CD14-positive monocyte (primary cell): ENCODE measurements at regions of chr7 and their contacts with region 1.

Region 1: DNA sequence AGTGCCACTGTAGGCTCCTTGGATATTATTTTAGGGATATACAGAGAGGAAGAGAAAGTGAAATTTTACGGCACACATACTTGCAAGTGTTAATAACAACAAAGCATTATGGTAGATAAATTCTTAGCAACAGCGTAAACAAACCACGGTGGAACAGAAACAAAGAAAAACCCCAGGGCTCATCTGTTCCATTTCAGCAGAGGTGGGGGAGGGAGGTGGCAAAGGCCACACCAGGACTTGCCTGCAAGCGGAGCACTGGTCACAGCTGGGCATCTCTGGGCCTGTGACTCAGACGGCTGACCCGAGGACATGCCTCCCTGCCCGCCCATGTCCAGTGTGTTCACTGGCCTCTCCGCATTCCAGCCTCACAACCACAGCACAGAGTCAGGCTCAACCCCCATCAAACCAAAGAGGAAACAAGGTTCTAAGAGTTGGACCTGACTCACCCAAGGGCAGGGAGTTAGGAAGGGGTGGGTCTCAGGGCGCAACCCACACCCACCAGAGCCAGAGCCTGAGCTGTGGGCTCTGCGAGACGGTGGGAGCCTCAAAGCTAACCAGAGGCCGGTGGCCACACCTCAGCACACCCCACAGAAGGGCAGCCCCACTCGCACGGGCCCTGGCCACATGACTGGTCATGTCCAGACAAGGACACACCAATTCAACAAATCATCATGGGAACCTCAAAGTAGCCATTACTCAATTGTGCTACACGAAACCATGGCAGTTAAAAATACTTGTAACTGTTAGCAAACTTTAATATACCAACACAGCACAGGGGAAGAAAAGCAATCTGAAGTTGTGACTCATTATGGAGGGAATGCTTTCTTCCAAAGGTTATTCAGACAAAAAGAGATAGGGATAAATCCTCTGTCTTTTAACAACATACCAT is 10.7 kb downstream of the ESYT2 start:
- DNase-seq: peak; percentile 97 to 99 (median 99)
- H3K4me3 ChIP-seq: peak overlapping the region; percentile 14 to 59 (median 37)
- H3K4me3 Mint-ChIP-seq: peak overlapping the region; percentile 61 to 87
- H3K27ac ChIP-seq: peak overlapping the region; percentile 97 to 100
- H3K27ac Mint-ChIP-seq: peak overlapping the region; percentile 98 to 99 (median 98)
- H3K4me1 ChIP-seq: peaks cover 62 to 68% of the 10 kb centered on the region in 2 donors
- H3K4me1 Mint-ChIP-seq: peaks cover 73% of the 10 kb centered on the region
- H3K27me3 ChIP-seq: no peaks in the 10 kb centered on the region
- H3K27me3 Mint-ChIP-seq: peaks cover 0 to 2% (median 0%) of the 10 kb centered on the region in 3 donors
- CTCF ChIP-seq: no peak

Region 2: GRCh38 chr7:158704704-158705468 is 113.7 kb before region 1 on chr7 and contains the start of gene NCAPG2:
- intact Hi-C with region 1: loop called (anchors 5 to 10 kb)
- DNase-seq: peak; percentile 99 to 100 (median 99)
- H3K4me3 ChIP-seq: peak within 1 kb of the TSS; percentile 87 to 96 (median 95)
- H3K4me3 Mint-ChIP-seq: peak within 1 kb of the TSS; percentile 74 to 84
- H3K27ac ChIP-seq: peak within 1 kb of the TSS; percentile 88 to 95
- H3K27ac Mint-ChIP-seq: peak within 1 kb of the TSS; percentile 74 to 92 (median 90)
- H3K4me1 ChIP-seq: peaks cover 35 to 50% of the 10 kb centered on the region in 2 donors
- H3K4me1 Mint-ChIP-seq: peaks cover 35% of the 10 kb centered on the region
- H3K27me3 ChIP-seq: no peaks in the 10 kb centered on the region
- H3K27me3 Mint-ChIP-seq: no peaks in the 10 kb centered on the region
- CTCF ChIP-seq: peak; percentile 23
- polyA plus RNA-seq, gene NCAPG2: 1.1 to 3.1 (median 1.7) TPM

Region 3: DNA sequence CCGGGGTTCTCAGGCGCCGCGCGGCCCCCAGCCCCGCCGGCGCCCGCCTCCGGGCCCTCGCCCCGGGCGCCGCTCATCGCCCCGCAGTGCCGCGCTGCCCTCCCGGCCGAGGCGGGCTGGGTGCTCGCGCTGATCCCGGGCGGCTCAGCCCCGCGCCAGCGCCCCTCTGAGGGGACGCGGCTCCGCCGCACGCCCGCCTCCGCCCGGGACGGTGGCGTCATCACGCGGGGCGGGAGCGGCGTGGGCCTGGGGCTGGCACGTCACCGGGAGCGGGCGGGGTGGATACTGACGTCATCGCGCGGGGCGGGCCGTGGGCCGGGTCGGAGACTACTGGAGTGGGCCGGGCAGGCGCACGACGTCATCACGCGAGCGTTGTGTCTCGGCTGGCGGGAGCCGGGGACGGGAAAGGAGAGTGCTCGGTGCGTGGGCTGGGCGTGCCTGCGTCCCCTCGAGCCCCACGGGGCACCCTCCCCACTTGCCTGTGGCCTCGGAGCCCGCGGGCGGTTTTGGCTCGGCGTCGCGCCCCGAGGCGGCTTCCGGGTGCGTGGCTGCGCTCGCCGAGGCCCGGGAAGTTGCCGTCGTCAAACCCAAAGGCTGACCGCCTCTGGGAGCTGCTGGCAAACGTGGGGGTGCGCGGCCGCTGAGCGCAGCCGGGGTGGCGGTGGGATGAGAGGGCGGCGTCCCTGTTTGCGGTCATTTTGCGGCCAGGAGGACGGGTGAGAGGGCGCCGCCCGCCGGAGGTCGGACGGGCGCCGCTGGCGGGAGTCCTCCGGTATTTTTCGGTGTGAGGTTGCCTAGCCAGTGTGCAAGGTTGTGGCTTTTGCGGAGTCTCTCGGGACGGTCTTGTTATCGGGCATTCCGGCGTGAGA is 11.0 kb after region 1 on chr7 and contains the start of gene ESYT2:
- intact Hi-C with region 1: loop called in 1 of 2 experiments (anchors 2 kb)
- DNase-seq: peak; percentile 98 to 99 (median 98)
- H3K4me3 ChIP-seq: peak within 1 kb of the TSS; percentile 75 to 97 (median 97)
- H3K4me3 Mint-ChIP-seq: peak within 1 kb of the TSS; percentile 90 to 98
- H3K27ac ChIP-seq: peak within 1 kb of the TSS; percentile 96 to 99
- H3K27ac Mint-ChIP-seq: peak within 1 kb of the TSS; percentile 93 to 97 (median 95)
- H3K4me1 ChIP-seq: peaks cover 22 to 23% of the 10 kb centered on the region in 2 donors
- H3K4me1 Mint-ChIP-seq: peaks cover 26% of the 10 kb centered on the region
- H3K27me3 ChIP-seq: no peaks in the 10 kb centered on the region
- H3K27me3 Mint-ChIP-seq: no peaks in the 10 kb centered on the region
- CTCF ChIP-seq: no peak
- polyA plus RNA-seq, gene ESYT2: 14.0 to 24.1 (median 22.0) TPM

Region 4: GRCh38 chr7:158856883-158857668 is 38.5 kb after region 1 on chr7:
- intact Hi-C with region 1: loop called in 1 of 2 experiments (anchors 5 kb)
- DNase-seq: no peak
- H3K4me3 ChIP-seq: peak overlapping the region; percentile 56 to 89 (median 67)
- H3K4me3 Mint-ChIP-seq: peak overlapping the region; percentile 96 to 99
- H3K27ac ChIP-seq: peak overlapping the region in 1 of 2 donors; percentile 65
- H3K27ac Mint-ChIP-seq: no peak overlapping the region
- H3K4me1 ChIP-seq: peaks cover 2 to 14% of the 10 kb centered on the region in 2 donors
- H3K4me1 Mint-ChIP-seq: peaks cover 3% of the 10 kb centered on the region
- H3K27me3 ChIP-seq: no peaks in the 10 kb centered on the region
- H3K27me3 Mint-ChIP-seq: peaks cover 1 to 7% (median 3%) of the 10 kb centered on the region in 3 donors
- CTCF ChIP-seq: no peak